B cell (primary cell): ENCODE measurements at regions of chr15 and their contacts with region 1.

Region 1: DNA sequence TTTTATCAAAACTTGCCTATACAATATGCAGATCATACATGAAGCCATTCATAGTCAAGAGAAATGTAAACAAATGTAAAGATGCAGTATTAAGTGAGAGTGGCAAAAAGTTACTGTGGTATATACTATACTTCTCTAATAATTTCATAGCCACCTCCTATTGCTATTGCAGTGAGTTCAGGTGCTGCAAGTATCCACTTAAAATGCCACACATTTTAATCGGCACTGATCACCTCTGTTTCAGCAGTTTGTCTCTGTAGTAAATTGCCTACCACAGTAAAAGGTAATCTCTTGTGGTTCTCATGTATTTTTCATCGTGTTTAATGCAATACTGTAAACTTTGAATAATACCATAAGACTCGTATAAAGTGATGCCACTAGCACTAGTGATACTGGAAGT is 20.4 kb upstream of the FAH start:
- DNase-seq: no peak
- ATAC-seq: no peak
- H3K4me3 ChIP-seq: no peak overlapping the region
- H3K4me3 Mint-ChIP-seq: no peak overlapping the region
- H3K27ac ChIP-seq: no peak overlapping the region
- H3K27ac Mint-ChIP-seq: no peak overlapping the region
- H3K4me1 ChIP-seq: no peaks in the 10 kb centered on the region
- H3K4me1 Mint-ChIP-seq: no peaks in the 10 kb centered on the region
- H3K27me3 ChIP-seq: no peaks in the 10 kb centered on the region
- H3K27me3 Mint-ChIP-seq: no peaks in the 10 kb centered on the region
- CTCF ChIP-seq: no peak

Region 2: GRCh38 chr15:80090879-80091503 is 41.4 kb before region 1 on chr15:
- CTCF ChIA-PET with region 1: no interaction called
- POLR2A ChIA-PET with region 1: no interaction called
- intact Hi-C with region 1: loop called (anchors 5 kb)
- DNase-seq: no peak
- ATAC-seq: no peak
- H3K4me3 ChIP-seq: no peak overlapping the region
- H3K4me3 Mint-ChIP-seq: no peak overlapping the region
- H3K27ac ChIP-seq: no peak overlapping the region
- H3K27ac Mint-ChIP-seq: no peak overlapping the region
- H3K4me1 ChIP-seq: peaks cover 0 to 3% of the 10 kb centered on the region in 2 donors
- H3K4me1 Mint-ChIP-seq: peaks cover 64% of the 10 kb centered on the region
- H3K27me3 ChIP-seq: no peaks in the 10 kb centered on the region
- H3K27me3 Mint-ChIP-seq: no peaks in the 10 kb centered on the region
- CTCF ChIP-seq: peak; percentile 52